Caco-2 (cell line): ENCODE measurements at regions of chr2 and their contacts with region 1.

Region 1: GRCh38 chr2:61993444-61994024 is 88.1 kb downstream of the COMMD1 start:
- DNase-seq: peak in 1 of 2 experiments; percentile 49
- H3K4me3 ChIP-seq: no peak overlapping the region
- H3K4me3 Mint-ChIP-seq: no peak overlapping the region
- H3K27ac Mint-ChIP-seq: peak overlapping the region; percentile 31
- H3K4me1 ChIP-seq: peaks cover 6% of the 10 kb centered on the region
- H3K4me1 Mint-ChIP-seq: peaks cover 45% of the 10 kb centered on the region
- H3K27me3 ChIP-seq: no peaks in the 10 kb centered on the region
- H3K27me3 Mint-ChIP-seq: no peaks in the 10 kb centered on the region
- CTCF ChIP-seq: peak; percentile 75 to 77

Region 2: GRCh38 chr2:61922714-61923113 is 70.8 kb before region 1 on chr2:
- CTCF ChIA-PET with region 1: no interaction called
- POLR2A ChIA-PET with region 1: no interaction called
- intact Hi-C with region 1: loop called (anchors 2 kb)
- DNase-seq: no peak
- H3K4me3 ChIP-seq: no peak overlapping the region
- H3K4me3 Mint-ChIP-seq: no peak overlapping the region
- H3K27ac Mint-ChIP-seq: no peak overlapping the region
- H3K4me1 ChIP-seq: peaks cover 22% of the 10 kb centered on the region
- H3K4me1 Mint-ChIP-seq: peaks cover 13% of the 10 kb centered on the region
- H3K27me3 ChIP-seq: no peaks in the 10 kb centered on the region
- H3K27me3 Mint-ChIP-seq: no peaks in the 10 kb centered on the region
- CTCF ChIP-seq: no peak

Region 3: GRCh38 chr2:62195421-62196277 is 202.1 kb after region 1 on chr2 and contains the start of gene B3GNT2:
- CTCF ChIA-PET with region 1: no interaction called
- POLR2A ChIA-PET with region 1: no interaction called
- intact Hi-C with region 1: loop called (anchors 10 kb)
- DNase-seq: peak; percentile 79 to 85
- H3K4me3 ChIP-seq: peak within 1 kb of the TSS; percentile 95
- H3K4me3 Mint-ChIP-seq: peak within 1 kb of the TSS; percentile 79
- H3K27ac Mint-ChIP-seq: peak within 1 kb of the TSS; percentile 36
- H3K4me1 ChIP-seq: peaks cover 23% of the 10 kb centered on the region
- H3K4me1 Mint-ChIP-seq: peaks cover 10% of the 10 kb centered on the region
- H3K27me3 ChIP-seq: no peaks in the 10 kb centered on the region
- H3K27me3 Mint-ChIP-seq: no peaks in the 10 kb centered on the region
- CTCF ChIP-seq: no peak
- total RNA-seq, gene B3GNT2: 47.4 and 50.5 TPM in 2 replicates

Region 4: DNA sequence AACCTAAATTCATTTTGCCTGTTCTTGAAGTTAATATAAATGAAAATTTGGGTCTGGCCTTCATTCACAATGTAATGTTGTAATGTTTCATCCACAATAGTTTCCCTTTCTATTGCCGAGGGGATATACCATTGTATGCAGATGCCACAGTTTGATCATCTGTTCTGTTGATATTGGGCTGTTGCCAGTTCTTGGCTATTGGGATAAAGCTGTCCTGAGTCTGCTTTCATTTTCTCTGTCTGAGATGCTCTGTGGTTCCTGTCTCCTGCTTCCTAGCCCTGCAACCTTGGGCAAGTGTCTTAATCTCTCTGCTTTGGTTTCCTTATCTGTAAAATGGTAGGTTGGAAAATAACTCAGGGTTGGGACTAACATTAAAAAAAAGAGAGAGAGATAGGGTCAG is 227.6 kb after region 1 on chr2:
- CTCF ChIA-PET with region 1: no interaction called
- POLR2A ChIA-PET with region 1: no interaction called
- intact Hi-C with region 1: loop called (anchors 10 kb)
- DNase-seq: no peak
- H3K4me3 ChIP-seq: no peak overlapping the region
- H3K4me3 Mint-ChIP-seq: no peak overlapping the region
- H3K27ac Mint-ChIP-seq: no peak overlapping the region
- H3K4me1 ChIP-seq: peaks cover 32% of the 10 kb centered on the region
- H3K4me1 Mint-ChIP-seq: peaks cover 31% of the 10 kb centered on the region
- H3K27me3 ChIP-seq: no peaks in the 10 kb centered on the region
- H3K27me3 Mint-ChIP-seq: no peaks in the 10 kb centered on the region
- CTCF ChIP-seq: no peak

Region 5: DNA sequence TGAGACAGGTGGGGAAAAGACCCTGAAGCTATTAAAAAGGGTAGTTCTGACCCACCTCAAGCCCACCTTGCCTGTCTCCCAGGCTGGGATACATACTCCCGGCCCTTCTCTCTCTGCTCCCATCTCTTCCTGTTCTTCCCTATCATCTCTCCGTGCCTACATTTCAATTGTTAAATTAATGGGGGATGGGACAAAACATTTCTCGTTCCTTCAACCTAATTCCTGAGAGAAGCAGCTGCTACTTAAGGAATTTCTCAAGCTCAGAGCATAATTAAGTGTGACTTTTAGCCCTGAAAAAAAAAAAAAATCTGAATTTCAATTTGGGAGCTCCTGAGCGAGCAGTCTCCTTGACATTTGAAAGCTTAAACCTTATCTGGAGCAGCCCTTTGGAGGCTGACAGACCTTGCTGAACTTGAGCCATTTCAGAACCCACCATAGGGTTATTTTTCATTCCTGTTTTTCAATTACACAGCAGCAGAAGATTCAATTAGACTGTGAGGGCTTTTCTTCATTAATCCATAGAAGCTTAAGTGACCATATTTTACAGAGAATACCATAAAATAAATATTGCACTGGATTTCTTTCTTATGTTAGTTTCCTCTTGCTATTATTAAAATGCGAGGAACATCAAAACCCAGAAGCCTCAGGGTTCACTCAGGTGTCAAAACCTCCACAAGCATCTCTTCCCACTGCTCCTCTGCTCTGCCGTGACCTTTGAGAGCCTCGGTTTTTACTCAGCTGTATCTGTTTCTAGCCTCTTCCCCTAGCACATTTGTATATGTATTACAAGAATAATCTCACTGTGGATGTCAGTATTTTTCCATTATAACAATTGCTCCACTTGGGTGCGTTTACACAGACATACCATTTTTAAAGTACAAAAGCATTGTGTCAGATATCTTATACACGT is 328.1 kb after region 1 on chr2:
- CTCF ChIA-PET with region 1: no interaction called
- POLR2A ChIA-PET with region 1: no interaction called
- intact Hi-C with region 1: loop called (anchors 10 kb)
- DNase-seq: no peak
- H3K4me3 ChIP-seq: no peak overlapping the region
- H3K4me3 Mint-ChIP-seq: no peak overlapping the region
- H3K27ac Mint-ChIP-seq: no peak overlapping the region
- H3K4me1 ChIP-seq: no peaks in the 10 kb centered on the region; the same call in 1 of the 2 replicates
- H3K4me1 Mint-ChIP-seq: peaks cover 16% of the 10 kb centered on the region
- H3K27me3 ChIP-seq: no peaks in the 10 kb centered on the region
- H3K27me3 Mint-ChIP-seq: no peaks in the 10 kb centered on the region
- CTCF ChIP-seq: no peak

Region 6: GRCh38 chr2:62456721-62457539 is 463.4 kb after region 1 on chr2:
- CTCF ChIA-PET with region 1: interaction called, 10 read pairs
- POLR2A ChIA-PET with region 1: no interaction called
- intact Hi-C with region 1: no loop called
- DNase-seq: peak; percentile 82 to 95
- H3K4me3 ChIP-seq: peak overlapping the region; percentile 68
- H3K4me3 Mint-ChIP-seq: peak overlapping the region; percentile 75
- H3K27ac Mint-ChIP-seq: peak overlapping the region; percentile 66
- H3K4me1 ChIP-seq: peaks cover 38% of the 10 kb centered on the region
- H3K4me1 Mint-ChIP-seq: peaks cover 8% of the 10 kb centered on the region
- H3K27me3 ChIP-seq: no peaks in the 10 kb centered on the region
- H3K27me3 Mint-ChIP-seq: no peaks in the 10 kb centered on the region
- CTCF ChIP-seq: peak; percentile 92 to 98

Region 7: DNA sequence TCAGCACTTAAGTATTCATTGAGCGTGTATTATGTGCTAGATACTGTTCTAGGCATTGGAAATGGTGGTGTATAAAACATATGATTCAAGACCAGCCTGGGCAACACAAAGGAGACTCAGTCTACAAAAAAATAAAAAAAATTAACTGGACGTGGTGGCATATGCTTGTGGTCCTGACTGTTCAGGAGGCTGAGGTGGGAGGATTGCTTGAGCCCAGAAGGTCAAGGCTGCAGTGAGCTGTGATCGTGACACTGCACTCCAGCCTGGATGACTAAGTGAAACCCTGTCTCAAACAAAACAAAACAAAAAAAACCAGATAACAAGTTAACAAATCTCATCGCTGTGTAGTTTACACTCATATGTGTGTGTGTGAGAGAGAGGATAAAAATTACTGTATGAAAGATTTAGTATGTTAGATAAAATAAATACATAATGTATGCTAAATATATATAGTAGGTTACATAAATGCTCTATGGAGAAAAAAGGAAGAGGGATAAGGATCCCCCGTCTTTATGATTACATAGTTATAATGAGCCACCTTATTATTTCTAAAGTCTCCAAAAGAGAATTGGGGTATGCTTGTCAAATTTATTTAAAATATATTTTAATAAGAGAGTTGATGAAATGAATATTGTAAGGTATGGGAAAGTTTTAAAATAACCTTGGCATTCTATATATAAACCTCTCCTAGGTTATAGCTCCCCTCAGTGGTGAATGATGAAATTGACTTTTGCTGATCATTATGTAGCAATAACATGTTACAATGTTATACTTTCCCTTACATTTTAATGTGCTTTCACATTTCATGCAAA is 781.2 kb after region 1 on chr2:
- CTCF ChIA-PET with region 1: no interaction called
- POLR2A ChIA-PET with region 1: no interaction called
- intact Hi-C with region 1: loop called (anchors 10 kb)
- DNase-seq: peak in 1 of 2 experiments; percentile 60
- H3K4me3 ChIP-seq: no peak overlapping the region
- H3K4me3 Mint-ChIP-seq: no peak overlapping the region
- H3K27ac Mint-ChIP-seq: peak overlapping the region; percentile 69
- H3K4me1 ChIP-seq: 0 out of 2 replicates have a peak, but pooled peaks cover 5% of the 10 kb centered on the region
- H3K4me1 Mint-ChIP-seq: peaks cover 29% of the 10 kb centered on the region
- H3K27me3 ChIP-seq: no peaks in the 10 kb centered on the region
- H3K27me3 Mint-ChIP-seq: no peaks in the 10 kb centered on the region
- CTCF ChIP-seq: peak; percentile 72 to 86